Psoas muscle (tissue), 8 donors: ENCODE measurements at regions of chr15 and their contacts with region 1.

Region 1: DNA sequence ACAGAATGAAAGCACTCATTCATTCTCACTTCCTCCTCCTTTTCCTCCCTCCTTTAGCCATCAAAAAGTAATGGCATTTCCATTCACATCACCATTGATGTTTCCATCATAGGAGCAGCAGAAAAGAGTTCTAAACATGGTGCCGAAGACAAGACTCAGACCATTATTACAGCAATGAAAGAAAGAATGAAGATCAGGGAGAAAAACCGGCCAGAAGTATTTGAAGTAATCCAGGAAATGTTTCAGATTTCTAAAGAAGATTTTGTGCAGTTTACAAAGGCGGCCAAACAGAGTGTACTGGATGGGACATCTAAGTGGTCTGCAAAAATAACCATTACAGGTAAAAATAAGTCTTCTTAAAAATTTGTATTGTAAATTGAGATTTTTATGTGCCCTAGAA is 285.8 kb downstream of the UNC13C start:
- DNase-seq: no peak
- ATAC-seq: no peak
- H3K4me3 ChIP-seq: no peak overlapping the region
- H3K27ac ChIP-seq: no peak overlapping the region
- H3K4me1 ChIP-seq: no peaks in the 10 kb centered on the region
- H3K27me3 ChIP-seq: no peaks in the 10 kb centered on the region
- CTCF ChIP-seq: no peak

Region 2: DNA sequence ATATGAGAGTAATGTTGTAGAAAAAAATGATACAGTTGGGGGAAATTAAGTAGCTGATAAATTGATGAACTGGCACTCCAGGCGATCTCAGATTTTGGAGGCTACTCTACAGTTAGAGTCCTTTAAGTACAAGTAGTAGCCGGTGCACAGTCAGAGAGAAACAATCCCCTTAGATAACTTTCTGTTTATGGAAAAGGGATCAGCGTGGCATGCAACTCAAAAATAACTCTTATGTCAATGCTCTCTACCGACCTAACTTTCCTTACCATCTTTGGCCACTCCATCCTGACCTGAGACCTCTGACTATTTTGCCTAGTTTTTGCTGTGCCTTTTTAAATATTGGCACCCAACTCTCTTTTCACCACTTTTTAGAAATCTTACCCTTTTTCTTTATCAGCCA is 13.8 kb after region 1 on chr15:
- intact Hi-C with region 1: no loop called
- DNase-seq: no peak
- ATAC-seq: peak; percentile 60 to 97 (median 88)
- H3K4me3 ChIP-seq: no peak overlapping the region
- H3K27ac ChIP-seq: no peak overlapping the region
- H3K4me1 ChIP-seq: no peaks in the 10 kb centered on the region
- H3K27me3 ChIP-seq: no peaks in the 10 kb centered on the region
- CTCF ChIP-seq: no peak

Region 3: DNA sequence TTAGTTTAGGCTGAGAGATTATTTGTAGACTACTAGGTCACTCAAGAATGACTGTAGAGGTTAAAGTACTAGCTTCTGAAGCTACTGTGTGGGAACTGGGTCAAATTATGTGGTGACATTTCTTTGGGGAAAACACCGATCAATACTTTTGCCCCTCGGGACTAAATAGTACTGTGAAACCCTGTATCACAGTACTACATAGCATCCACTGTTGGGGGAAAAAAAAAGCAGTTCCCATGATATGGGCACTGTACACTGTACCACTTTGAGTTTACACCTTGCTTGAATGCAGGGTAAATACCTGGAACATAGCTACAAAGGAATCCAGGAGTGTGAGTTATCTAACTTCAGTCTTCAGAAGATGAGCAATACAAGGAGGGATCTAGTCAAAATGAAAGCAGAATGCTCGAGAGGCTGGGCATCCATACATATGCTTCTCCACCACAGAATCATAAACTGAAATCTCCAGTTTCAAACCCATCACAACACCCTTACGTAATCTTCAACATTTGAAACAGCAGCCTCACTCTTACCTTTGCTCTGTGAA is 25.6 kb after region 1 on chr15:
- intact Hi-C with region 1: loop called in 1 of 2 experiments (anchors 1 kb)
- DNase-seq: no peak
- ATAC-seq: no peak
- H3K4me3 ChIP-seq: no peak overlapping the region
- H3K27ac ChIP-seq: no peak overlapping the region
- H3K4me1 ChIP-seq: no peaks in the 10 kb centered on the region
- H3K27me3 ChIP-seq: no peaks in the 10 kb centered on the region
- CTCF ChIP-seq: no peak